ENCODE measurements at regions of chr5 and their contacts with region 1.

Region 1: DNA sequence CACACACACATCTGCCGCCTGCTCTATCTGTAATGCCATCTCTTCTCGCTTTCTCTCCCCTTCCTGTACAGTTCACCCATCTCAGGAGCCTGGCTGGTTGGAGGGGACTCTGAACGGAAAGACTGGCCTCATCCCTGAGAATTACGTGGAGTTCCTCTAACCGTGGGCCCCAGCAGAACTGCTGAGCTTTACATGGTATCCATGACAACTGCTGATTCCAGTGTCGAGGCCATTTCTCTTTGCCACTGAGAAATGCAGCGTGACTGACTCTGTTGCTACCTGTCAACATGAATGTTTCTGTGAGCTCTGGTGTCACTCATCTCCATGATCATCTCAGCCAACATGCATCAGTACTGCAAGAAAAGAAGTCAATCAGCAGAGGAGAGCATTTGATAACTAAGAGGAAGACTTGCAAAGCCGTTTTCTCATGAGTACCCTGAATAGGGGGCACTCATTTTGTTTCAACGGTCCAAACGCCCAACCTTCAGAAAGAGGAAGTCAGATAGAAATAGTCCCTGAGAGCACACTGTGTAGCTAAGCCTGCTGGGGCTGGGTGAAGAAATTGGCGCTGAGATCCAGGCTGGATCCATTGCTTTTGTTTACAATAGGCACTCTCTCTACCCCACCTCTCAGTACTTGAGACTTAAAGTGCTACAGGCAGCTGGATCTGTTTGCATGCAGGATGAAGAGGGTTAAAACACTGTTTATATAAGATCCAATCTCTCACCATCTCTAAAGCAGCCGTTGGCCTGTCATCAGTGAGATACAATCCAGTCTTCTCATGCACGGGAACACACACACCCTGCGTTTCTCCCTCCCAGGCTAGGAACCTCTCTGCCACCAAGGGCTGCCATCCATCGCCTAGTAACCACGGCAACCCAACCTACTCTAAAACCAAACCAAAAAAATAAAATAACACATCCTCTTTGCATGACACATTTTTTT is 180.9 kb downstream of the NR3C1 start:
- DNase-seq: peak; percentile 82
- ATAC-seq: peak; percentile 70
- H3K4me3 ChIP-seq: no peak overlapping the region
- H3K27ac ChIP-seq: peak overlapping the region; percentile 100
- H3K4me1 ChIP-seq: peaks cover 60% of the 10 kb centered on the region
- H3K27me3 ChIP-seq: no peaks in the 10 kb centered on the region
- CTCF ChIP-seq: no peak
- EP300 ChIP-seq: 0 out of 4 replicates have a peak, but pooled peaks of 1 of the 2 experiments have one; percentile 50
- POLR2A ChIP-seq: peak; percentile 50; the same call in 1 of the 2 replicates
- RAD21 ChIP-seq: no peak; the same call in 1 of the 2 replicates

Region 2: GRCh38 chr5:143314659-143315058 is 92.1 kb after region 1 on chr5:
- CTCF ChIA-PET with region 1: no interaction called
- POLR2A ChIA-PET with region 1: interaction called, 3 read pairs
- RAD21 ChIA-PET with region 1: no interaction called
- SMC1A ChIA-PET with region 1: interaction called, 13 read pairs
- in situ Hi-C with region 1: no loop called
- intact Hi-C with region 1: no loop called
- DNase-seq: no peak
- ATAC-seq: peak; percentile 61
- H3K4me3 ChIP-seq: no peak overlapping the region
- H3K27ac ChIP-seq: 0 out of 2 replicates have a peak overlapping the region, but pooled peaks have one; percentile 7
- H3K4me1 ChIP-seq: peaks cover 16% of the 10 kb centered on the region; the same call in 1 of the 2 replicates
- H3K27me3 ChIP-seq: no peaks in the 10 kb centered on the region
- CTCF ChIP-seq: no peak
- EP300 ChIP-seq: no peak
- POLR2A ChIP-seq: no peak
- RAD21 ChIP-seq: no peak